PC-9 (cell line): ENCODE measurements at regions of chr12 and their contacts with region 1.

Region 1: DNA sequence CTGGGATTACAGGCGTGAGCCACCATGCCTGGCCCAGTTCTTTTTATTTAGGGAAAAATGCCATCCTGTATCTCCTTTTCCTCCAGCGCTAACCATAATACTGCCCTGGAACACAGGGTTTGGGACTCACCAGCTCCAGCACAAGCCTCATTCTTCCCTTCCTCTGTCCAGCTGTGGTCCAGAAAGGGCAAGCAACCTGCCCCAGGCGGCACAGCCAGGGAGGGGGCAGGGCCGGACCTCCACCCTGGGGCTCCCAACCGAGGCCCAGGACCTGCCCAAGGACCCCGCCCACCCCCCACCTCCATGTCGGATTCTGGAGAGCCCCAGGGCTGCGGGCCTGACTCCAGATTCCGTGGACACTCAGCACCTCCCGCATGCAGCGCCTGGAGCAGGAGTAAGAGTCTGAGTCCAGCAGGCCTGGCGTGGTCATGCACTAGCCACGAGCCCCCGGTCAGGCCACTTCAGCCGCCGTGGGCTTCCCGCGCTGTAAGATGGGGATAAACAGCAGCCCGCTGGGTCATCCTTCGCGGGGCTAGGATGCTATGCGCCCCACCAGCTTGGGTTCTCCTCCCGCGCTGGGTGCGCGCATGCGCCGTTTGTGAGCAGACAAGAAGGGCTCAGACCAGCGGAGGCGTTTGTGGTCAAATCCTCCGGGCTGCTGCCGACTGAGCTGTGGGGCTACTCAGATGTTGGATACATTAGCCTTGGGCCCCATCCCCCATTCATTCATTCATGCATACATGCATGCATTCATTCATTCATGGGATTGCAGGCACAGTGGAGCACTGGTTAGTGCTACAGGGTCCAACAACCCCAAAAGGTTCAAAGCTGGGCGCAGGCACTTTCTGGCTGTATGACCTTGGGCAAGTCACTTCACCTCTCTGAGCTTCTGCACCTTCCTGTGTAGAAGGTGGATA is 16.3 kb downstream of the TMEM119 start:
- DNase-seq: no peak
- H3K4me3 ChIP-seq: no peak overlapping the region
- H3K27ac ChIP-seq: no peak overlapping the region
- H3K4me1 ChIP-seq: no peaks in the 10 kb centered on the region
- H3K27me3 ChIP-seq: peaks cover 14% of the 10 kb centered on the region; the same call in 1 of the 2 replicates
- CTCF ChIP-seq: no peak

Region 2: DNA sequence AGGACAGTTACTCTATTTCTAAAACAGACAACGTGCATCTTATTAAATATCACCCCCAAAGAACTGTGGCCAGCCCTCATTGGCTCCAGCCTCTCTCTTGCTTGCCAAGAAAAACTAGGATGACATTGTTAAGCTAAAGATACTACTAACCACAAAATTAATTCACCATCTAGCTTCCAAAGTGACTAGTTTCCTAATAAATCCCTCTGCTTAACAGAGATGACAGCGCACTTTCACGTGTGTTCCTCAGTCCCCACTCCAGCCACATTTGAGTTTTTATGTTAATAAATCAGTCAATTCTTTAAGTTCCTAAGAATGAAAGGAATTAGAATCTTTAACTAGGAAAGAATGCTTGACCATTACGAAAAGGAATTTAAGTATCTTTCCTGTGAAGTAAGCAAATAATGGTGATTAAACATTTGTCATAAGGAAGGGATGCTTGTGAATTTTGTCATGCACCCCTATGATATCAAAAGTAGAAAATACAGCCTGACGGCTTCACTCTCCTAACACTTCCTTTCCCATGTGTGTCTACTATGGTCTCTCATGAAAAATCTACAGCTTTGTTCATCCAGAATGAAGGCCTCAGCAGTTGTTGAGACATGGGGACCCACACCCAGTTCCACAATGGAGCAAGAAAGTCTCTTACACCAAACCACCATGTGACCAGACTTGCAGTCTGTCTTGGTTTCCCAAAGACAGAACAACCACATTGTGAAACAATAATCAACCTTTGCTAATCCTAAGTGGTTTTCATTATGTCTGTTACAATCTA is 141.6 kb after region 1 on chr12:
- CTCF ChIA-PET with region 1: no interaction called
- POLR2A ChIA-PET with region 1: interaction called, 13 read pairs
- intact Hi-C with region 1: no loop called
- DNase-seq: peak in 1 of 2 experiments; percentile 92
- H3K4me3 ChIP-seq: peak overlapping the region; percentile 22; the same call in 1 of the 2 replicates
- H3K27ac ChIP-seq: peak overlapping the region; percentile 90
- H3K4me1 ChIP-seq: peaks cover 59% of the 10 kb centered on the region
- H3K27me3 ChIP-seq: no peaks in the 10 kb centered on the region
- CTCF ChIP-seq: no peak